GM12878 (cell line): ENCODE measurements at regions of chr3 and their contacts with region 1.

Region 1: DNA sequence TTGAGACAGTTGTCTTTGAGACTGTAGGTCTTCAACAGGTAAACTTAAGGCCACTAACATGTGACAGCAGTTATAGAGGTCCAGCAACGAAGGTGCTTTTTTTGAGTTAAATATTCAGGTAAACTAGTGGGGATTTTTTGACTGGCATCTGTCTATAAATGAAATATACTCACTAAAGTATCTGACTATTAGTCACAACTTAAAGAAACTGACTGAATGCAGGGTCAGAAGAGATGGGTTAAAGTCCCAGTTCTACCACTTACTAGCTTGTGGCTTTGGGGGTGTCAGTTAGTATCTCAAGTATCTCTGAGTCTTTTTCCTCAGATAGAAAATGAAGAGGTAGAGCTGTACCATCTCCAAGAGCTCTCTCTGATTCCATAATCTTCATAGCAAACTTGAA is 18.0 kb downstream of the MIX23 start:
- DNase-seq: no peak
- ATAC-seq: peak; percentile 81
- H3K4me3 ChIP-seq: no peak overlapping the region
- H3K27ac ChIP-seq: peak overlapping the region; percentile 0; the same call in 1 of the 2 replicates
- H3K4me1 ChIP-seq: no peaks in the 10 kb centered on the region
- H3K27me3 ChIP-seq: no peaks in the 10 kb centered on the region
- CTCF ChIP-seq: no peak
- EP300 ChIP-seq: no peak
- POLR2A ChIP-seq: no peak
- RAD21 ChIP-seq: no peak

Region 2: DNA sequence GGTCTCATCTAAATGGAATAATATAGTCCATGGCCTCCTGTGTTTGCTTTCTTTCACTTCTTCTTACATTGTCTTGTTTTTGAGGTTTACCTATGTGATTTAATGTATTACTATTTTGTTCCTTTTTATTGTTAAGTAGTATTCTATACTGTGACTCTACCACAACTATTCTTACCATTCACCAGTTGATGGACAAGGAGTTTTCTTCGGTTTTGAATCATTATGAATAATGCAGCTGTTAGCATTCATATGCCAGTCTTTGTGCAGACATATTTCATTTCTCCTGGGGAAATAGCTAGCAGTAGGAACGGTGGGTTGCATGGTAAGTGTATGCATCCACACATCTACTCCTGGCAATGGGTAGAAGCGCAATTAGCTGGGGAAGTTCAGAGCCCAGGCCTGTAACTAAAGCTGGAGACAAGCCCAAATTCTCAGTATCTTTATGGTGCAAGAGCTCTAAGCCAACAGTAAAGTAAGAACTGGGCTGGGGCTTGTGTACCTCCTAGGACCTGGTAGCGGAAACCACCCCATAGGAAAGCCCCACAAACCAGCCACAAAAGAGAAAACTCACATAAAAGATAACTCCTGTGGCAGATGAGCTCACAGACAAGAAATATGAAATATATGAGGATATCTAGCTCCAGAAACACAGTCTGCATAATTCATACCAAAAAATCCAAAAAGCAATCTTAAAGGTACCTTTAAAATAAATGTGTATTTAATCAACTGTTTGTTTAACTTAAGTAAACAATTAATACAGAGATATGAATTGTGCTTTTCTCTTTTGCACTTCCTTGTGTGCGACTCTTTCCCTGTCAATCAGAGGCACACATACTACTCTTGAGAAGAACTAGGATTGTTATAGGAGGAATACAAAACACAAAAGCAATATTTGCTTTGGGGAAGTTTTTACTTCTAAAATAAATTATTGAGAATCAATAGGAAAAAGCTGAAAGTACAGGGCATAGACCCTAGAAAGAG is 42.7 kb before region 1 on chr3:
- CTCF ChIA-PET with region 1: interaction called, 9 read pairs
- POLR2A ChIA-PET with region 1: interaction called, 7 read pairs
- RAD21 ChIA-PET with region 1: interaction called, 16 read pairs
- SMC1A ChIA-PET with region 1: interaction called, 18 read pairs
- in situ Hi-C with region 1: no loop called
- intact Hi-C with region 1: no loop called
- DNase-seq: no peak
- ATAC-seq: peak; percentile 92
- H3K4me3 ChIP-seq: no peak overlapping the region
- H3K27ac ChIP-seq: peak overlapping the region; percentile 84
- H3K4me1 ChIP-seq: peaks cover 37% of the 10 kb centered on the region
- H3K27me3 ChIP-seq: no peaks in the 10 kb centered on the region
- CTCF ChIP-seq: no peak
- EP300 ChIP-seq: no peak; a peak in 1 of 4 replicates
- POLR2A ChIP-seq: no peak
- RAD21 ChIP-seq: no peak

Region 3: GRCh38 chr3:122338400-122338799 is 26.7 kb before region 1 on chr3:
- CTCF ChIA-PET with region 1: interaction called, 3 read pairs
- POLR2A ChIA-PET with region 1: no interaction called
- RAD21 ChIA-PET with region 1: no interaction called
- SMC1A ChIA-PET with region 1: interaction called, 14 read pairs
- in situ Hi-C with region 1: no loop called
- intact Hi-C with region 1: no loop called
- DNase-seq: no peak
- ATAC-seq: no peak
- H3K4me3 ChIP-seq: no peak overlapping the region
- H3K27ac ChIP-seq: no peak overlapping the region
- H3K4me1 ChIP-seq: no peaks in the 10 kb centered on the region
- H3K27me3 ChIP-seq: no peaks in the 10 kb centered on the region
- CTCF ChIP-seq: no peak
- EP300 ChIP-seq: no peak
- POLR2A ChIP-seq: no peak
- RAD21 ChIP-seq: no peak

Region 4: GRCh38 chr3:122350814-122351418 is 14.2 kb before region 1 on chr3:
- CTCF ChIA-PET with region 1: interaction called, 5 read pairs
- POLR2A ChIA-PET with region 1: interaction called, 6 read pairs
- RAD21 ChIA-PET with region 1: interaction called, 7 read pairs
- SMC1A ChIA-PET with region 1: interaction called, 13 read pairs
- in situ Hi-C with region 1: no loop called
- intact Hi-C with region 1: no loop called
- DNase-seq: no peak
- ATAC-seq: no peak
- H3K4me3 ChIP-seq: no peak overlapping the region
- H3K27ac ChIP-seq: no peak overlapping the region
- H3K4me1 ChIP-seq: no peaks in the 10 kb centered on the region
- H3K27me3 ChIP-seq: no peaks in the 10 kb centered on the region
- CTCF ChIP-seq: no peak
- EP300 ChIP-seq: no peak
- POLR2A ChIP-seq: no peak
- RAD21 ChIP-seq: no peak

Region 5: GRCh38 chr3:122377975-122378374 is 12.9 kb after region 1 on chr3:
- CTCF ChIA-PET with region 1: interaction called, 27 read pairs
- POLR2A ChIA-PET with region 1: interaction called, 28 read pairs
- RAD21 ChIA-PET with region 1: interaction called, 19 read pairs
- SMC1A ChIA-PET with region 1: interaction called, 50 read pairs
- in situ Hi-C with region 1: no loop called
- intact Hi-C with region 1: no loop called
- DNase-seq: no peak
- ATAC-seq: no peak
- H3K4me3 ChIP-seq: no peak overlapping the region
- H3K27ac ChIP-seq: no peak overlapping the region
- H3K4me1 ChIP-seq: peaks cover 11% of the 10 kb centered on the region
- H3K27me3 ChIP-seq: no peaks in the 10 kb centered on the region
- CTCF ChIP-seq: no peak
- EP300 ChIP-seq: no peak
- POLR2A ChIP-seq: no peak
- RAD21 ChIP-seq: no peak

Region 6: GRCh38 chr3:122383771-122384697 is 19.0 kb after region 1 on chr3 and contains the start of gene FAM162A:
- CTCF ChIA-PET with region 1: interaction called, 27 read pairs
- POLR2A ChIA-PET with region 1: interaction called, 28 read pairs
- RAD21 ChIA-PET with region 1: interaction called, 19 read pairs
- SMC1A ChIA-PET with region 1: interaction called, 50 read pairs
- in situ Hi-C with region 1: no loop called
- intact Hi-C with region 1: no loop called
- DNase-seq: peak; percentile 83
- ATAC-seq: peak; percentile 95
- H3K4me3 ChIP-seq: peak within 1 kb of the TSS; percentile 76
- H3K27ac ChIP-seq: peak within 1 kb of the TSS; percentile 82
- H3K4me1 ChIP-seq: peaks cover 16% of the 10 kb centered on the region
- H3K27me3 ChIP-seq: no peaks in the 10 kb centered on the region
- CTCF ChIP-seq: peak; percentile 55 to 77 (median 61); a peak in 5 of 6 replicates
- EP300 ChIP-seq: peak in 1 of 2 experiments; percentile 8; a peak in 1 of 4 replicates
- POLR2A ChIP-seq: peak; percentile 96
- RAD21 ChIP-seq: peak; percentile 38
- polyA plus RNA-seq, gene FAM162A: 290 to 297 TPM